ENCODE measurements at regions of chr2 and their contacts with region 1.

Region 1: DNA sequence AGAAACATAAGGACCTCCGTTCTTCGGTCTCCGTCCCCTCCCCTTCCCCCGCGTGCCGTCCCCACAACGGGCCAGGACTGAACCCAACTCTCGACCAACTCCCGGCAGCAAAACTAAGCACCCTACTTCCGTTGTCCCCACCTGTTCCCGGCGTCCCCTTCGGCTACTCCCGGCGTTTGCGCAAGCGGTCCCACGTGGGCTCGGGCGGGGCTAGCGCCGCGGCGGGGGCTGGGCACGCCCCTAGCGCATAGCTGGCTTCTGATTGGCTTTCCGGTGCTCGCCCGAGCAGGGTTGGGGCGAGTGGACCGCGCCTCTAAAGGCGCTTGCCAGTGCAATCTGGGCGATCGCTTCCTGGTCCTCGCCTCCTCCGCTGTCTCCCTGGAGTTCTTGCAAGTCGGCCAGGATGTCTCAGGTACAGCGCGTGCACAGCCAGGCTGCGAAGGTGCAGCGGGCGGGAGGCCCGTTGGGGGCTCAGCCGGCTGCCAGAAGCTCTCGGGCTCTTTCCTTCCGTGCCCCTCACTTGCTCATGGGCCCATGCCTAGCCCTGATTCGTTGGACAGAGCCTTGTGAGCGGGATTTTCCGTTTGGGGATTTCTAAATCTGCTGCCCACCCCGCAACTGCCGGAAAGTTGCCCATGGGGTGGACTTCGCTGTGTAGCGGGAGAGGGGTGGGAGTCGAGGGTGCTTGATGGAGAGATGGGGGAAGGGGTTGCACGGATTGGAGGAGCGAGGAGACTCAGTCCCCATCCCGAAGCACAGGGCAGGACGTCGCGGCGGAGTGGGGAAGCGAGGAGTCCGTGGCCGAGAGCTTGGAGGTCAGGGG is at the starts of genes C2orf76 and DBI:
- DNase-seq: peak; percentile 96
- H3K4me3 Mint-ChIP-seq: peak within 1 kb of the TSS; percentile 100
- H3K27ac Mint-ChIP-seq: peak within 1 kb of the TSS; percentile 96
- H3K4me1 Mint-ChIP-seq: peaks cover 33% of the 10 kb centered on the region
- H3K27me3 Mint-ChIP-seq: no peaks in the 10 kb centered on the region
- total RNA-seq, gene C2orf76: 10.5 to 11.5 TPM
- total RNA-seq, gene DBI: 149 to 150 TPM

Region 2: DNA sequence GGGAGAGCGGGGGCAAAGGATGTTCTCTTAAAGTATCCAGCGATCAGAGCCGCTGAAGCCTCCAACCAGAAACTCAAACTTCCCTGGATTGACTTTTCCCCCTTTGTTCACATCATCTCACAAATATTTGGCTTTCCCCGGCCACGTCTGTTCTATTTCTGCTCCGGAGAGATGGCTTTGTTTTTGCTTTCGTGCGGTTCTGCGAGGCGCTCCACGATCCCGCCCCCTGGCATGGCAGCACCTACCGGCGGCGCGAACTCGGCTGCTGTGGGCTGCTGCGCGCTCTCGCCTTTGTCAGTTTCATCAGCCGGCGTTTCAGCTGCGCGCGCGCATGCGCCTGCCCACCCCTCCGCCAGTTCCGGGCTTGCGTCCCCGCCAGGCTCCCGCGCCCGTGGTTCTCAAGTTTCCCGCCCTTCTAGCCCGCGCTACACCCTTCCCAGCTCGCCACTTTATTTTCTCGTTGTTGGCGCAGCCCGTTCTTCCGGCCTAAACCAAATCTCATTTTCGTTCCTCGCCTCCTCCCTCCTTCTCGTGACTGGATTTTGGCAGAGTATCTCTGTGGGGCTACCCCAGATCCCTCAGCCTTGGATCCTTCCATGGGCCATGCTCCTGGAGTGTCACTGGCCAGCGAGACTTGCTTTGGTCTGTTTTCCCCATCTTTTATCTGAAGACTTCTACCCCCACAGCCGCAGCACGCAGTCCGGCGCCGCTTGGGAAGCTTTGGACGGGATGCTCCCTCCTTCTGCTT is 1180.6 kb before region 1 on chr2:
- CTCF ChIA-PET with region 1: no interaction called
- POLR2A ChIA-PET with region 1: no interaction called
- intact Hi-C with region 1: loop called (anchors 5 kb)
- DNase-seq: peak; percentile 92
- H3K4me3 Mint-ChIP-seq: peak overlapping the region; percentile 93
- H3K27ac Mint-ChIP-seq: peak overlapping the region; percentile 94
- H3K4me1 Mint-ChIP-seq: peaks cover 11% of the 10 kb centered on the region
- H3K27me3 Mint-ChIP-seq: no peaks in the 10 kb centered on the region

Region 3: GRCh38 chr2:118954297-118955060 is 412.4 kb before region 1 on chr2:
- CTCF ChIA-PET with region 1: no interaction called
- POLR2A ChIA-PET with region 1: no interaction called
- intact Hi-C with region 1: no loop called
- DNase-seq: no peak
- H3K4me3 Mint-ChIP-seq: no peak overlapping the region
- H3K27ac Mint-ChIP-seq: no peak overlapping the region
- H3K4me1 Mint-ChIP-seq: no peaks in the 10 kb centered on the region
- H3K27me3 Mint-ChIP-seq: no peaks in the 10 kb centered on the region

Region 4: GRCh38 chr2:119234377-119235019 is 132.4 kb before region 1 on chr2:
- CTCF ChIA-PET with region 1: no interaction called
- POLR2A ChIA-PET with region 1: no interaction called
- intact Hi-C with region 1: loop called (anchors 5 kb)
- DNase-seq: no peak
- H3K4me3 Mint-ChIP-seq: no peak overlapping the region
- H3K27ac Mint-ChIP-seq: no peak overlapping the region
- H3K4me1 Mint-ChIP-seq: no peaks in the 10 kb centered on the region
- H3K27me3 Mint-ChIP-seq: no peaks in the 10 kb centered on the region

Region 5: DNA sequence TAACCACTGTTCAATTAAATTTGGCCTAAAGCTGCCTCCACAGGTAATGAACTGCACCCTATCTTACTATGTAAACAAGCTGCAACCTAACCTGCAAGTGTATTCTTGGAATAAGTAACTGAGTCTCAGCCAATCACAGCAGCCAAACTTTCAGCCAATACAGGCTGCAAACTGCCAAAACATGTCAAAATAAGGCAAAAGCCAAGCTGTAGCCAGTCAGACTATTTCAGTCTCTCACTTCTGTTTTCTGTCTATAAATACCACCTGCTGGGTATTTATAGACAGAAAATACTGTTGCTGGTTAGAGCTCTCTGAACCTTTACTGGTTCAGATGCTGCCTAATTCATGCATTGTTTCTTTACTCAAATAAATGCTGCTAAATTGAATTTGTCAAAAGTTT is 14.5 kb before region 1 on chr2:
- CTCF ChIA-PET with region 1: no interaction called
- POLR2A ChIA-PET with region 1: interaction called, 4 read pairs
- intact Hi-C with region 1: loop called (anchors 1 kb)
- DNase-seq: no peak
- H3K4me3 Mint-ChIP-seq: no peak overlapping the region
- H3K27ac Mint-ChIP-seq: no peak overlapping the region
- H3K4me1 Mint-ChIP-seq: peaks cover 7% of the 10 kb centered on the region
- H3K27me3 Mint-ChIP-seq: no peaks in the 10 kb centered on the region

Region 6: DNA sequence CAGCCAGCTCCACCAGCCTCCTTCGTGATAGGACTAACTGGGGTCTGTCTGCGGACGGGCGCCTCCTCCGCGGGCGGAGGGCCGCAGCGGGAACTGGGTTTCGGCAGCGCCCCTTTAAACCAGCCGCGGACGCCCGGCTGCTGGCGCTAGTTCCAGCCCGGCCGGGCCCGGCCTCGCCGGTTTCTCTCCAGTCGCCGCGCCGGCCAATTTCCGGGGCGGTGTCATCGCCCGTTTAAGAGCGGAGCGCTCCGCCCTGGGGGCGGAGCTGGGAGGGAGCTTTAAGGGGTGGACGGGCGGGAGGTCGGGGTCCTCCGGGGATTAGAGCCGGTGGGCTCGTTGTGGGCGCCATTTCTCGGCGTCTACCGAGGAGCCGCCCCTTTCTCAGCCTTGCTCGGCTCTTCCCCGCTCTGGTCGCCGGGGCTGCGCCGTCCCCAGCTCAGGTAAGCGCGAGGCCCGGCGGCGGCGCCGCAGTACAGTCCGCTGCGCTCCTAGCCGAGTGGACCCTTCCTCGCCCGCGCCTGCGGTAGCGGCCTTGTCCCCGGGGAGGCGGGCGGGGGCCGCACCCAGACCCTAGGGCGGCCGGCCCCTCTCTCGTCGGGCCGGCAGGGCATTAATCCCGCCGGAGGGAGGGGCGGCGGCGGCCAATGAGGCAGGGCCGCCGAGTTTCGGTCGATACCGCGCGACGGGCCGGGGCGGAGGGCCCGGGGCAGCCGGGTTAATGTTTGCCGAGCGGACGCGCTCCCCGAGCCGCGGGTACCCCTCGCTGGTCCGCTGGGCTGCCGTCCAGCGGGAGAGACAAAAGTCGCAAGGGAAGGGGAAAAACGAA is 646.1 kb after region 1 on chr2 and contains the start of gene EPB41L5:
- CTCF ChIA-PET with region 1: no interaction called
- POLR2A ChIA-PET with region 1: no interaction called
- intact Hi-C with region 1: loop called (anchors 5 kb)
- DNase-seq: peak; percentile 87
- H3K4me3 Mint-ChIP-seq: peak within 1 kb of the TSS; percentile 73
- H3K27ac Mint-ChIP-seq: no peak within 1 kb of the TSS
- H3K4me1 Mint-ChIP-seq: peaks cover 10% of the 10 kb centered on the region
- H3K27me3 Mint-ChIP-seq: peaks cover 1% of the 10 kb centered on the region
- total RNA-seq, gene EPB41L5: 2.5 to 2.7 TPM

Measured in activated CD4-positive, alpha-beta memory T cell treated with anti-CD3 and anti-CD28 coated beads for 36 hours (primary cell).